HEK293T (cell line): ENCODE measurements at regions of chr4 and their contacts with region 1.

Region 1: GRCh38 chr4:153573881-153574802 is 108.0 kb downstream of the TMEM131L start:
- DNase-seq: peak; percentile 23

Region 2: GRCh38 chr4:153344131-153345010 is 229.8 kb before region 1 on chr4 and contains the start of gene MND1:
- CTCF ChIA-PET with region 1: interaction called, 22 read pairs
- POLR2A ChIA-PET with region 1: interaction called, 9 read pairs
- DNase-seq: peak; percentile 91

Region 3: DNA sequence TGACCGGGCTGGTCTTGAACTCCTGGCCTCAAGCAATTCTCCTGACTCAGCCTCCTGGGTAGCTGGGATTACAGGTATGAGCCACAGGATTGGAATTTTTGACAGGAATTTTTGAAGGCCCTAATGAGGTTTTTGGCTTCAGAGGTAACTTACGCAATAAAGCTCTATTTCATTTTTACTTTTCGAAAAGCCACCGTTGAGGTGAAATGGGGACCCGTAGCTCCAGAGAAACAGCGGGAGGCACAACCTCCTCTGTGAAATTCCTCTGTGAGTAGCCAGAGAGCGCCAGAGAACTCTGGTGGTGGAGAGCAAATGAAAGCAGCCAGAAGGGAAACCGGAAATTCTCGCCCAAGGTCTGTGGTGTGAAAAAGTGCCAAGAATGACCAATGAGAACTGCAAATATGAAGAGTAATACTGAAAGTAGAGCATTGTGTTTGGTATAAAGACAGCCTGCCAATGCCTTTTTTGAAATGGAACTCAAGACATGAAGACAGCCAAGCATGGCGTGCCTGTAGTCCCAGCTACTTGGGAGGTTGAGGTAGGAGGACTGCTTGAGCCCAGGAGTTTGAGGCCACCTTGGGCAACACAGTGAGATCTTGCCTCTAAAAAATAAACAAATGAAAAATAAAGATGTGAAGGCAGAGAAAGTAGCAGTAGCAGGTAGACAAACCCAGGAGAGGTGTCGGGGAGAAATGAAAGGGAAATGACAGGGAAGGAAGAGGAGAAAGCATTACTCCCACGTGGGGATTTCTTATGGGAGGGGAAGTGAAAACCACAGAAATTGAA is 141.0 kb before region 1 on chr4:
- CTCF ChIA-PET with region 1: interaction called, 22 read pairs
- POLR2A ChIA-PET with region 1: no interaction called
- DNase-seq: peak; percentile 59

Region 4: GRCh38 chr4:153585026-153585425 is 10.9 kb after region 1 on chr4:
- CTCF ChIA-PET with region 1: no interaction called
- POLR2A ChIA-PET with region 1: no interaction called
- DNase-seq: no peak